ENCODE measurements at regions of chr6 and their contacts with region 1.

Region 1: DNA sequence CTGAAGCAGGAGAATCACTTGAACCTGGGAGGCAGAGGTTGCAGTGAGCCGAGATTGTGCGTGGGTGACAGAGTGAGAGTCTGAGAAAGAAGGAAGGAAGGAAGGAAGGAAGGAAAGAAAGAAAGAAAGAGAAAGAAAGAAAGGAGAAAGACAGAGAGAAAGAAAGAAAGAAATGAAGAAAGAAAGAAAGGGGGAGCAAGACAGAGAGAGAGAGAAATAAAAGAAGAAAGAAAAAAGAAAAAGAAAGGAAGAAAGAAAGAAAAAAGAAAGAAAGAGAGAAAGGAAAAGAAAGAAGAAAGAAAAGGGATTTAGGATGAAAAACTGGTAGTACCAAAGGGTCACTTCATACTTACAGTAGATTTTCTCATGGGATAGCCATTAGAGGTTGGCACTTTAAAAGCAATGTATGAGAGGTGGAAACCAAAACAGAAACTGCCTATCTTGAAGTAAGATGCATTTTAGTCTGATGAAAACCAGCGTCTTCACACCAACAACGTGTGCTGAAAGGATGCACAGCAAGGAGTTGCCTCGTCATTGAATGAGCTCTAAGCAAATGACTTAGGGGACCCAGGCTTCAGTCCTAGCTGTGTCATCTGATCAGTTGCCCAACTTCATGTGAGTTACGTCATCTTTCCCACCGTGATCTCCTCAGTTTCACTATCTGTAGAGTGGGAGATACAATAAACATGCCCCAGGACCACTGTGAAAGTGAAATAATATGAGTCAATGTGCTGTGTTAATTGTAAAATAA is 133.9 kb upstream of the NEDD9 start:
- DNase-seq: peak; percentile 75
- H3K4me3 Mint-ChIP-seq: peak overlapping the region; percentile 29
- H3K27ac Mint-ChIP-seq: peak overlapping the region; percentile 67
- H3K4me1 Mint-ChIP-seq: peaks cover 96% of the 10 kb centered on the region
- H3K27me3 Mint-ChIP-seq: no peaks in the 10 kb centered on the region

Region 2: GRCh38 chr6:11093589-11094410 is 272.6 kb before region 1 on chr6 and contains the start of gene SMIM13:
- CTCF ChIA-PET with region 1: no interaction called
- intact Hi-C with region 1: loop called (anchors 5 kb)
- DNase-seq: peak; percentile 98
- H3K4me3 Mint-ChIP-seq: peak within 1 kb of the TSS; percentile 92
- H3K27ac Mint-ChIP-seq: peak within 1 kb of the TSS; percentile 96
- H3K4me1 Mint-ChIP-seq: peaks cover 27% of the 10 kb centered on the region
- H3K27me3 Mint-ChIP-seq: no peaks in the 10 kb centered on the region
- total RNA-seq, gene SMIM13: 5.7 to 7.1 TPM

Region 3: DNA sequence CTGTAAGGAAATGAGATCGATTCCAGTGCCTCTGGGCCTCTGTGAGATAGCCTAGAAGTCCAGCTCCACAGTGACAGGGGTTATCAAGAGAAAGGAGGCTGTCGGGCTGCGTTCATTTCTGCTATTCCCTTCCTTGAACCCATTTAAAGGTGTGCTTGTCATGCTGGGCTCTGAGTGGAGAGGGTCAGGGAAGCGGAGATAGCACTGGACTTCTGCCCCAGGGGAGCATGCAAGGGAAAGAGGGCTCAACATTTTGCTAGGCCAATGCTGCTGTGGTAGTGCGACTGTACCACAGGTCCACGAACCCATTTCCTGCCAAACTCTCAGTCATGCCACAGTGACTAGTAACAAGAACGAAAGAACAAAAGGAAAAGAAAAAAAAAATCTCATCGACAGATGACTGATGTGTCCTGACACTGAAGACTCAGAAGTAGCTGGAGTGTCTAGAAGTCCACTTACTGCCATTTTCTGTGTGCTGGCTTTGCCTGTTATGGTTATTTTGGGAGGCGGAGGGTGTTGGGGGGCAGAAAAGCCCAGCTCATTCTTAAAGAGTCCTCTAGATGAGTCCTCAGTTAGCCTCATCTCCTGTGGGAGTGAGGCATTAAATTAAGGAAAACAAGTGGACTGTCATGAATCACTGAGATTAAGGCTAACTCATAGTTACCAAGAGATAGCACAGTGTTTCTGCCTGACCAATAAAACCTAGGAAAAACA is 141.9 kb before region 1 on chr6:
- CTCF ChIA-PET with region 1: no interaction called
- intact Hi-C with region 1: no loop called
- DNase-seq: peak; percentile 63
- H3K4me3 Mint-ChIP-seq: no peak overlapping the region
- H3K27ac Mint-ChIP-seq: peak overlapping the region; percentile 46
- H3K4me1 Mint-ChIP-seq: peaks cover 28% of the 10 kb centered on the region
- H3K27me3 Mint-ChIP-seq: no peaks in the 10 kb centered on the region

Region 4: DNA sequence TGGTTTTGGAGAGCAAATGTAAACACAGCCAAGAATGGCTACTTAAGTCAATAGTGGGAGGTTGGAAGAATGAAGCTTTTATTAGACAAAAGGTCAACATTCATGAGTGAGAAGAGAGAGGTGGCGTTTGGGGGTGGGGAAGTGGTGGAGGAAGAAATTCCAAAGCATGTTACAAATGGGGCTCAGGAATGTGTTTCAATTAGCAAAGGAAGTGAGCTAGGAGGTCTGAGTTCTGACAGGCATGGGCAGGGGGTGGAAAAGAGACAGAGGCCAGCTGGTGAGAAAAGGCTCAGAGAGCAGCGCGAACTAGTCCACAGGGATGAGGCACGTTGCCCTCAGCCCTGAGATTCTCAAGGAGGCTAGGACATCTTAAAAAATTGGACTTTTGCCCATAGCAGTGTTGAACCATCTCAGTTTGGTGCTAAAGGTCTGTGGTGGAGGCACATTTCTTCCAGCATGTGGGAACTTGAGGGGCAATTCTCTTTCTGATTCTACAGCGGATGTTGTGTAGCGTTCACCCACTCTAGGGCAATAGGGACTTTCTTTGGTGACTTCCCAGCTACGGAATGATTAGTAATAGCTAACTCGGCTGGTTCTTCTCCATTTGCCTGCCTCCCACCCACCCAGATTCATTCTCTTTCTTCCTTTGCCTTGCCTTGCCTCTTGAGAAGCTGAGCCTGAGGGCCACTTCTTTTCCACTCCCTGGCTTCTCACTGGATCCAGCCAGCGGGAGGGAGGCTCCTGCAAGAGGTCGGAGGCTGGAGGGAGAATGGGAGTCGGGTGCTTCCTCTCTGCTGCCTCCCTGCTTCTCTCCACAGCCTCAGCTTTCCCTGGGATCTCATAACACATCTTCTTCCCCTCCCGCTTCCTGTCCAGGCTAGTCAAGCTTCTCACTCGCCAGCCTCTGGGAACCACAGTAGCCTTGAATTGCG is 88.8 kb before region 1 on chr6:
- CTCF ChIA-PET with region 1: no interaction called
- intact Hi-C with region 1: loop called (anchors 1 kb)
- DNase-seq: peak; percentile 48
- H3K4me3 Mint-ChIP-seq: peak overlapping the region; percentile 3
- H3K27ac Mint-ChIP-seq: peak overlapping the region; percentile 74
- H3K4me1 Mint-ChIP-seq: peaks cover 42% of the 10 kb centered on the region
- H3K27me3 Mint-ChIP-seq: no peaks in the 10 kb centered on the region

Region 5: GRCh38 chr6:11330413-11330760 is 36.0 kb before region 1 on chr6:
- CTCF ChIA-PET with region 1: no interaction called
- intact Hi-C with region 1: loop called (anchors 1 kb)
- DNase-seq: no peak
- H3K4me3 Mint-ChIP-seq: no peak overlapping the region
- H3K27ac Mint-ChIP-seq: peak overlapping the region; percentile 68
- H3K4me1 Mint-ChIP-seq: peaks cover 58% of the 10 kb centered on the region
- H3K27me3 Mint-ChIP-seq: no peaks in the 10 kb centered on the region

Region 6: GRCh38 chr6:11381801-11382513 is 15.6 kb after region 1 on chr6:
- CTCF ChIA-PET with region 1: interaction called, 9 read pairs
- intact Hi-C with region 1: loop called (anchors 1 kb)
- DNase-seq: peak; percentile 83
- H3K4me3 Mint-ChIP-seq: peak overlapping the region; percentile 86
- H3K27ac Mint-ChIP-seq: peak overlapping the region; percentile 91
- H3K4me1 Mint-ChIP-seq: peaks cover 57% of the 10 kb centered on the region
- H3K27me3 Mint-ChIP-seq: no peaks in the 10 kb centered on the region

Region 7: DNA sequence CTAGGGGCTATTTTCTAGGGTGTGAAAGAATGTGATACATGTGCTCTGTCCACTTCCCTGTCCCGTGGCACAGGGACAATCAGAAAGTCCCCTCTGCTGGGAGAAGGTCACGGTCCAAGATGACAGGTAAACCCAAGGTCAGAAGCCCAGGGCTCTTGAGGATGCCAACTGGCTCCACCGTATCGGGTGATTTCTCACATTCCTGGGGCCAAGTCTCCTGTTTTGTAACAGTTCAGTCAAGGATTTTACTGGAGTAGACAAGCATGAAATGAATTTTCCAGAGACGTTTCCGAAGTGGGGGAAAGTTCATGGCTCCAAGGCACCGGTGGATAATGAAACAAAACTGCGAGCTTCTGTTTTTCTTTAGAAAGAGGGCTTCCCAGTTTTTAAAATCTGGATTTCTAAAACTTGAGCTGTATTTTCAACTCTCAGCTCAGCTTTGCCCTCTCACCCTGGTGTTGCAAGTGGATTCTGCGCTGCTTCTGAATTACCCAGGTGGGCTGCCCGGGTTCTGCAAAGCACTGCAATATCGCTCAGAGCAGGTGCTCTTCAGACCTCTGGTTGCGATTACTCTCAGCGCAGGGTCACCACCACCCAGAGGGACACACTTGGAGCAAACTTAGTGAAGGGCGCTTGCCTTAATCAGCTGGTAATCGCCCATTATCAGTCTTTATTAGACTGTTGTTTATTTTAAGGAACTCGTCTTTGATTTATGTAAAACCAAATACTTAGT is 106.8 kb after region 1 on chr6:
- CTCF ChIA-PET with region 1: no interaction called
- intact Hi-C with region 1: no loop called
- DNase-seq: no peak
- H3K4me3 Mint-ChIP-seq: no peak overlapping the region
- H3K27ac Mint-ChIP-seq: no peak overlapping the region
- H3K4me1 Mint-ChIP-seq: no peaks in the 10 kb centered on the region
- H3K27me3 Mint-ChIP-seq: peaks cover 4% of the 10 kb centered on the region

Region 8: DNA sequence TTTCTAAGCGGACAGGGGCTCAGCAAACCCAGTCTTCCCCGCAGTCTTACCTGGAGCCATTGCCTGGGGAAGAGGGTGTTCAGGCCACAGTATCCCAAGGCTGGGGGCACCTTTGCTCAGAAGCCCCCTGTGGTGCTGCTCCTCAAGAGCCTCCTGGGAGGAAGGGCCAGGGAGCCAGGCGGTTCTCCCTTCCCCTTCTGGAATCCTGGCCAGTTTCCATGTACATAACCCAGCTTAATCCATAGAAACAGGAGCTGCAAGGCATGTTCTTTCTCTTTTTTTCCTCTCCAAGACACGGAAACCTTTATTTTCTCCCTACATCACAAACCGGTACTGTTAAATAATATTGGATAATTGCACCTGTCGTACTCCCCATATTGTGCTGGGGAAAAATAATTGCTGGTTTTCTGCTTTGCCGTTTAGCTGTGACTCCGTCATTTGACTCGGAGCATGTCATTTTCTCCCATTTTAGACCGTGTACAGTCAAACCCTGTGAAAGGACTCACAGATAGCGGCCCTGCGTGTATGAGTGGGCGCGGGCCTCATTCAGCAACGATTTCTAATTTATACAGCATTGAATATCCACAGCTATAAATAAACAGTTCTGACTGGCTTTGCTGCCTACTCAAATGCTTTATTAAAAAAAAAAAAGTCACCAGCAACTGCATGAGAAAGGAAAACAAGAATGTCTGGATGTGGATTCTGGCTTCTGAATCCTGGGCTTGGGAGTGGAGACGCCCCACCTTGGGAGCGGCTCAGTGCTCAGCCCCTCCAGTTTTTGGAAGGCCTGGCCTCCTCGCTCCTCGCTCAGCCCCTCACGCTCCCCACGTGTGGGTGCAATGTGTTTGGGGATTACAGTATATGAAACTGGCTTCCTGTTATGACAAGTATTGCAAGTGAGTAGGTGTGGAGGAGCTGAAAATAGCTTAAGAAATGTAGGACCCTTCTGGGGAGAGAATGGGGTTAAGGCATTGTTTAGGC is 344.9 kb after region 1 on chr6:
- CTCF ChIA-PET with region 1: interaction called, 3 read pairs
- intact Hi-C with region 1: loop called (anchors 5 kb)
- DNase-seq: peak; percentile 79
- H3K4me3 Mint-ChIP-seq: peak overlapping the region; percentile 57
- H3K27ac Mint-ChIP-seq: peak overlapping the region; percentile 97
- H3K4me1 Mint-ChIP-seq: peaks cover 79% of the 10 kb centered on the region
- H3K27me3 Mint-ChIP-seq: no peaks in the 10 kb centered on the region

Measured in activated naive CD4-positive, alpha-beta T cell treated with anti-CD3 and anti-CD28 coated beads for 36 hours (primary cell).